ENCODE measurements at regions of chr11 and their contacts with region 1.

Region 1: DNA sequence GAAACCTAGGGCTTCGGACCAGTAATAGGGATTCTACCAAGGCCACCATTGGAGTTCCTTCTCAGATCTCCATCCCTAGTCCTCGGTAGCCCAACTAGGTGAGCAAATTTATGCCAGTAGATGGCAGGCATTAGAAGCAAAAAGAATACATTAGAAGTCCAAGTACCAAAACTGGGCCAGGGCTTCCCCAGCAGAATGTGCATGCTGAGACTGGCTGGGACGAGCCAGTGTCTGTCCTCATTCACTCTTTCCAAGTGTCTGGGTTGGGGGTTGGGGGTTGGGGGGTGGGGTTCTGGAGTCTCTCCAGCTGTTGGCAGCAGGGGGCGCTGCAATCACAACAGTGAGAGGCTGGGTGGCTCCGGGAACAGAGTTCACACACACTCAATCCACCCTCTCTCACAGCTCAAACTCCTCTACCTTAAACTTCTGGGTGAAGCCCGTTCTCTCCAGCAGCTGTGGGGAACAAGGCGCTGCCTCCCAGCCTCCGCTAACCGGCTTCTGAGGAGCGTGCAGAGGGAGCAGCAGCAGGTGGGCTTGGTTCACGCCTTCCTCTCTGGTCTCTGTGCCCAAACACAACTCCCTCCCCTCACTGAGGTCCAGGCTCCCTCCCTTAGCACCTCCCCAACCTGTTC is 57.5 kb downstream of the BTG4 start:
- DNase-seq: peak; percentile 33 to 83
- H3K4me3 ChIP-seq: no peak overlapping the region
- H3K4me1 ChIP-seq: no peaks in the 10 kb centered on the region
- H3K27me3 ChIP-seq: peaks cover 21% of the 10 kb centered on the region; the same call in 1 of the 2 replicates

Region 2: DNA sequence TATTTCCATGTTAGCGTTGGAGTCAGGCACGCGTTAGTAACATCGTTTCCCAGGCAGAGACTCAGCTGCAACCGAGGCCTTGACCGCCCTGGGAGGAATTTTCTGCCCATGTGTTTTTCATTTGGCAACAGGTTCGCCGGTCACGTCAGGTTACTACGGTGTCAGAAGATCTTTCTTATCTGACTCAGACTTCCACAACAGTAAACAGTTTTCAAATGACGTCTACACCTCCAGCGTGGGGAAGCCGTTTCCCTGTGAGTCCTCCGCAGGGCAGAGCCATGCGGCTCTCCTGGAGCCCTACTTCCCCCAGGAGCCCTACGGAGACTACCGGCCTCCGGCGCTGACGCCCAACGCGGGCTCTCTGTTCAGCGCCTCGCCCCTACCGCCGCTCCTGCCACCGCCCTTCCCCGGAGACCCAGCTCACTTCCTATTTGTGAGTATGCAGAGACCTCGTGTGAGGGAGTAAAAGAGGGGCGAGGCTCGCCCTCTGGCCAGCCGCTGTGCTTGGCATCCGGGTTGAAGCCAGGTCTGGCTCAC is 170.7 kb before region 1 on chr11:
- in situ Hi-C with region 1: loop called (anchors 5 kb)
- DNase-seq: no peak
- H3K4me3 ChIP-seq: no peak overlapping the region
- H3K4me1 ChIP-seq: no peaks in the 10 kb centered on the region
- H3K27me3 ChIP-seq: peaks cover 11% of the 10 kb centered on the region

Region 3: DNA sequence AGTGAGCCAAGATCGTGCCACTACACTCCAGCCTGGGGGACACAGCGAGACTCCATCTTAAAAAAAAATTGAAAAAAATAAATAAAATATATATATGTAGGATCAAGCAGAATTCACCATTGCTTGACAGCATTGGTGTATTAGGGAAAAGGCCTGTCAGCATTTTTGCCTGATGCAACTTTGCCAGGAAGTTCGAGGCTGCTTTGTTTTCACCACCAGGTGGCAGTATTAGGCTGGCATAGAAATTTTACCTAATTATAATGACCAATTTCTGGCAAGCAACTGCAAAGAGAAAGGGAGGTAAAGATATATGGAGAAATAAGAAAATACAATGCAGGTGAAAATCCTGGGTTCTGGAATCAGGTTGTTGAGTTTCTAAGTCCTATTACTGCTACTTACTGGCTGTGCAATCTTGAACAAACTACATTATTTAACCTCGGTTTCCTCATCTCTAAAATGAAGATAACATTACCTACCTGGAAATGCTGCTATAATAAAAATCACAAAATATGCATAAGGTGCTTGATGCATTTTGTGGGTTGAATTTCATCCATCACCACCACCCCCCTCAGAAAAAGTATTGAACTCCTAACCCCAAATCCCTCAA is 110.5 kb after region 1 on chr11:
- in situ Hi-C with region 1: loop called (anchors 10 kb)
- DNase-seq: peak; percentile 45 to 78
- H3K4me3 ChIP-seq: no peak overlapping the region
- H3K4me1 ChIP-seq: no peaks in the 10 kb centered on the region
- H3K27me3 ChIP-seq: no peaks in the 10 kb centered on the region

Region 4: DNA sequence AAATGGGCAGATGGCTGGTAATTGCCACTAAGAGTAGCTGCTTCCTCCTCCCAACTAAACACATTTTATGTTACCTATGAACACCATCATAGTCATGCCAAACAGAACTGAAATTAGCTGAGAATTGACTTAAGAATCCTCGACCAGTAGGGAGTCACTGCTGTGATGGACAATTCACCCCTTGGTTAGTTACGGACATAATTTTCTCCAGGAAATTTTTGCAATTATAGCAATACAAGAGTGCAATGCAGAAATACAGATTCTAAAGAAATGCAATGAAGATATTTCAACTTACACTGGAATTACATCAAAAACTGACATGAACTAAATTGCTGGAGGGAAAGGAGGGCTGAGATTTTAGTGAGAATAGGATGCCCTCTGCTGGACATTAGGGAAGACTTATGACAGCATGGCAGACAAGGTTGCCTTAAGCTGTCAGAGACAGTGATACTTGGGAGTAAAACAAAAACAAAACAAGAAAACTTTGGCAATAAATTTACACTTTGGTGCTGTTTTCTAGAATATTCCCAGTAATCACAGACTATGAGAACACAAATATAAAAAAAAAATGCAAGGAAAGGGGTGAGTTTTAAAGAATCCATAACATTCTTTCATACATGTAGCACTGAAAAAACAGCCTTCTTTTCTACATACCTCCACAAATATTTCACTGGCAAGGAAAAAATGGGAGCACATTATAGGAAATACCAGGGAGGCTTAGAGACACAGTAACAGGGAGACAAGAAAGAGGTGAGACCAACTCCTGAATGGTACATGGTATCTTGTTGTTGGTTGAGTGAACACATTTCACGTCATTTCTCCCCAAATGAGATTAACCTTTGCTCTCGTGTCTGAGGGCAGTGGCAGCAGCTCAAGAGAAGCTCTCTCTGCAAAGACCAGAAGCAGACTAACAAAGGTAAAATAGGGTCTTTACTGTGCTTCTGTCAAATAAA is 322.7 kb after region 1 on chr11:
- in situ Hi-C with region 1: loop called (anchors 10 kb)
- DNase-seq: peak; percentile 38 to 76
- H3K4me3 ChIP-seq: no peak overlapping the region
- H3K4me1 ChIP-seq: no peaks in the 10 kb centered on the region
- H3K27me3 ChIP-seq: no peaks in the 10 kb centered on the region